ENCODE measurements at regions of chr2 and their contacts with region 1.

Region 1: GRCh38 chr2:5777131-5777535 is 84.9 kb downstream of the SOX11 start:
- DNase-seq: no peak
- H3K4me3 ChIP-seq: no peak overlapping the region
- CTCF ChIP-seq: no peak

Region 2: DNA sequence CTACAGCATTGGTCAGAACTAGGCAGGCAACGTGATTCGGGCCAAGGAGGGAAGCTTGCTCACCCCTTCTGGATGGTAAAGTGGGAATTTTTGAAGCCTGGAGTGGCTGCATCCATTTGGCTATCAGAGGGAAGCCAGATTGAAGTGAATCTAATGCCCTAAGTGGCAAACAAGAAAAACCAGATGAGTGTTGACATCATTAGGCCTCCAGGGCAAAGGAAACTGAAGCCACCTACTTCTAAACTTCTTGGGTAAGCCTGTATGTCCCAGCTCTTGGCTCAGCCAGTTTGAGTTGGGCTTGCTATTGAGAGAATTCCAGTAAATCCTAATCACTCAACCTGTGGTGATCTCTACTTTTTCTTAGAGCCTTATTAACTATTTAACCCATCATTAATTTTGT is 64.0 kb before region 1 on chr2:
- in situ Hi-C with region 1: loop called (anchors 5 kb)
- DNase-seq: no peak
- H3K4me3 ChIP-seq: no peak overlapping the region
- CTCF ChIP-seq: no peak

Region 3: DNA sequence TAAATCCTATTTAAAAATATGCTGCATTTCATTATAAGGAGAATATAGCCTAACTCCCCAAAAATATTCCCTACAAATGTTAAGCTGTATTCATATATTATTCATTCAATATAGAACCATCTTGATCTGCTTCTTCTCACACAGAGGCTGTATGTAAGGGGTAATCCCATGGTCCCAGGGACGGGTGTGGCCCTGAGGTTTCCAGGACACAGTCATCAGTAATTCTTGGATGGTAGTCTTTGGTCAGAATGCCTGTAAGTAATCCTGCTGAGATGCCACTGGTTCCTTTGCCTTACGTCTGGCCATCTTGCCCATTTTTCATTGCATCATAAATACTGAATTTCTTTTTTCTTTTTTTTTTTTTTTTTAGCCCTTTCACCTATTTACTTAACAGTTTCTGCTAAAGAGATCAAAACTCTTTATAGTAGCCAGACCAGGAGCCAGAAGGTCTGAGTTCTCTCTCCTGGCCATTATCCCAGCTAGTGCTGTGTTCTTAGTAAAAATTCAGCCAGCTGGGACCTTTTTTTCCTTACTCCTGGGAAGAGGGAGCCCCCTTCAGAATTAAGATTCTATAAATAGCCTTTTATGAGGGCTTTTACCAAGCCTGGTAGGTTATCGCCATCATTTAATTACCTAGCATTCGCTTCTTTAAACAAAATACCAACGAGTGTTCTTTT is 50.0 kb after region 1 on chr2:
- in situ Hi-C with region 1: no loop called
- DNase-seq: no peak
- H3K4me3 ChIP-seq: no peak overlapping the region
- CTCF ChIP-seq: no peak